Activated T-helper 1 cell treated with anti-CD3 and anti-CD28 coated beads, Interleukin-12 subunit alpha, Interleukin-12 subunit beta, Interleukin-2, Interleukin-4 antibody, amounts not matched to agents 30 ng/mL and 10 ng/mL and 1 ng/mL, durations not matched to agents 14 hours and 24 hours and 36 hours (primary cell): ENCODE measurements at regions of chr17 and their contacts with region 1.

Region 1: GRCh38 chr17:47698749-47699535 is 5.0 kb downstream of the TBKBP1 start:
- DNase-seq: peak; percentile 64
- H3K4me3 Mint-ChIP-seq: no peak overlapping the region
- H3K27ac Mint-ChIP-seq: no peak overlapping the region
- H3K4me1 Mint-ChIP-seq: peaks cover 68% of the 10 kb centered on the region
- H3K27me3 Mint-ChIP-seq: no peaks in the 10 kb centered on the region

Region 2: GRCh38 chr17:47663912-47664625 is 34.9 kb before region 1 on chr17:
- intact Hi-C with region 1: loop called (anchors 5 kb)
- DNase-seq: peak; percentile 43
- H3K4me3 Mint-ChIP-seq: peak overlapping the region; percentile 30
- H3K27ac Mint-ChIP-seq: peak overlapping the region; percentile 70
- H3K4me1 Mint-ChIP-seq: peaks cover 38% of the 10 kb centered on the region
- H3K27me3 Mint-ChIP-seq: no peaks in the 10 kb centered on the region

Region 3: GRCh38 chr17:47733047-47733673 is 34.2 kb after region 1 on chr17 and contains the start of gene TBX21:
- intact Hi-C with region 1: loop called (anchors 1 kb)
- DNase-seq: peak; percentile 83
- H3K4me3 Mint-ChIP-seq: peak within 1 kb of the TSS; percentile 100
- H3K27ac Mint-ChIP-seq: peak within 1 kb of the TSS; percentile 96
- H3K4me1 Mint-ChIP-seq: peaks cover 84% of the 10 kb centered on the region
- H3K27me3 Mint-ChIP-seq: no peaks in the 10 kb centered on the region
- total RNA-seq, gene TBX21: 89.8 and 90.8 TPM in 2 replicates

Region 4: DNA sequence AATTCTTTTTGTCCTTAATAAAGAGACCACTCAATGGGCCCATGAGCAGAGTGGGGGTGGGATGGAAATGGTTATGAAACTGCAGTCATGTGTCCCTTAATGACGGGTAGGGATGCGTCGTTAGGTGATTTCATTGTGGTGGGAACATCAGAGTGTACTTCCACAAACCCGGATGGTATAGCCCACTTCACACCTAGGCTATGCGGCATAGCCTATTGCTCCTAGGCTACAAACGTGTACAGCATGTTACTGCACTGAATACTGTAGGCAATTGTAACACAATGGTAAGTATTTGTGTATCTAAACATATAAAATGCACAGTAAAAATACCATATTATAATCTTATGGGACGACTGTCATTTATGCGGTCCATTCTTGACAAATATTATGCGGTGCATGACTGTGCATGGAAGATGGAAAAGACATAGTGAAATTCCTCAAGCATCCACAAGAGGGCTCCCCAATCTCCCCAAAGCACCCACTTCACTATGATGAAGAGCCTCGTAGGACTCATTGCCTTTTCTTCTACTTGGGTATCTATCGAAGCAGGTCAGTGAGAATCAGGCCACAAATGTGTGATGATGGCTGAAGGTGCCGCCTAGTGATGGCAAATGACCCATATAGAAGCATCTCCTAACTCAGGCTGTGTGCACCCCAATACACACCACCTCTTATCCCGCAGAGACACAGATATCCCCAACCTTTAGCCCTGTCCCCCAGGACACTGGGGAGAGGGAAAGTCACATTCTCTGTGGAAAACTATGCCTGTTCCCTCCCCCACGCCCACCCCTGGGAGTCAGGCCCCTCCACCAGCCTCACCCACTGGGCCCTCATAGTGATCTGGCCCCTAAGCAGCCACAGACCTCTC is 77.6 kb after region 1 on chr17:
- intact Hi-C with region 1: loop called (anchors 1 kb)
- DNase-seq: peak; percentile 12
- H3K4me3 Mint-ChIP-seq: no peak overlapping the region
- H3K27ac Mint-ChIP-seq: no peak overlapping the region
- H3K4me1 Mint-ChIP-seq: no peaks in the 10 kb centered on the region
- H3K27me3 Mint-ChIP-seq: peaks cover 52% of the 10 kb centered on the region

Region 5: DNA sequence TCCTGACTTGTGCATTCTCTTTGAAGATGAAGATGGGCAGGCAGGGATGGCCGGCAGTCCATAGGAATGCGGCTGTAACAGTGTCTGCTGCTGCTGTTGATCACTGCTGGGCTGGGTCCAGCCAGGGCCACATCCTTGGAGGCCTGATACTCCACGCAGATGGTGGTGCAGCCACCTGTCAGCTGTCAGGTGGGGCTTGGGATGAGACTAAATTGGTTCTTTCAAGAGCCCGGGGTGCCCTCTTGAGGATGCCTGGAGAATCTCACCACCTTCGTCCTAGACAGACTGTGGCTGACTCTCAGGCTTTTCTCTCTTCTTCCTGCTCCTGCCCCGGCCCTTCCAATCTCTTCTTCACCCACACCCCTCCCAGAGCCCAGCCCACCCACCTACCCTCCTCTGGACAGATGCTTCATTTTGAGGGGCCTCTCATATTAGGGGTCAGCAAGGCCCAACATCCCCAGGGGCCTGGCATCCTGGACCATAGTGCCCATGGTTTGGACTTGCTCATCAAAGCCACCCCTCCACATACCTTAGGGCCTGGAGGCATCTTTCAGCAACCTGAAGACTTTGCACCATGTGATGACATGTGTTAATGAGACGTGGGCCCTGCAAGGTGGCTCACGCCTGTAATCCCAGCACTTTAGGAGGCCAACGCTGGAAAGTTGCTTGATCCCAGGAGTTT is 103.5 kb after region 1 on chr17:
- intact Hi-C with region 1: loop called (anchors 1 kb)
- DNase-seq: peak; percentile 33
- H3K4me3 Mint-ChIP-seq: no peak overlapping the region
- H3K27ac Mint-ChIP-seq: no peak overlapping the region
- H3K4me1 Mint-ChIP-seq: peaks cover 6% of the 10 kb centered on the region
- H3K27me3 Mint-ChIP-seq: peaks cover 7% of the 10 kb centered on the region